ENCODE measurements at regions of chr1 and their contacts with region 1.

Region 1: GRCh38 chr1:150186789-150187559 is 37.3 kb downstream of the PLEKHO1 start:
- DNase-seq: no peak
- H3K4me3 ChIP-seq: no peak overlapping the region
- H3K27ac ChIP-seq: peak overlapping the region; percentile 0
- H3K27me3 ChIP-seq: no peaks in the 10 kb centered on the region
- CTCF ChIP-seq: peak; percentile 52

Region 2: GRCh38 chr1:149942207-149942606 is 244.8 kb before region 1 on chr1:
- CTCF ChIA-PET with region 1: interaction called, 11 read pairs
- POLR2A ChIA-PET with region 1: no interaction called
- DNase-seq: no peak
- H3K4me3 ChIP-seq: no peak overlapping the region
- H3K27ac ChIP-seq: no peak overlapping the region
- H3K27me3 ChIP-seq: no peaks in the 10 kb centered on the region
- CTCF ChIP-seq: peak; percentile 56

Region 3: GRCh38 chr1:150067184-150068036 is 119.6 kb before region 1 on chr1 and contains the start of gene VPS45:
- CTCF ChIA-PET with region 1: interaction called, 125 read pairs
- POLR2A ChIA-PET with region 1: no interaction called
- DNase-seq: peak; percentile 72
- H3K4me3 ChIP-seq: peak within 1 kb of the TSS; percentile 88
- H3K27ac ChIP-seq: peak within 1 kb of the TSS; percentile 96
- H3K27me3 ChIP-seq: no peaks in the 10 kb centered on the region
- CTCF ChIP-seq: peak; percentile 30
- polyA plus RNA-seq, gene VPS45: 49.5 and 61.3 TPM in 2 replicates

Region 4: DNA sequence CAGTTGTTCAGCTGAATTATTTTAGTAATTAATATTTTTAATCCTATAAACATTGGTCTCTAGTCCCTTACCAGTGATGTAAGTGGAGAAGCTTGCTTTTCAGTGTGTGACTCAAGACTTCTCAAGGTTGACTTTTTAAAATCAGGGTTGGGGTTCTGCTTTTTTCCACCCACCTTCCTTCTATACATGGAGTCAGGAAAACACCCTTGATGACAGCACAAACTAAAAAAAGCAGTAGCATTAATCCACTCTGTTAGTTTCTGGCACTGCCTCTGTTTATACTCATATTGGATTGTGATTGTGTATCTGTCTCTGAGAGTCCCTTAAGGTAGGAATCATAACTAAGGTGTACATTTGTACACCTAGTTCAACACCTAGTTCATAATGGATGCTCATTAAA is 45.5 kb before region 1 on chr1:
- CTCF ChIA-PET with region 1: interaction called, 10 read pairs
- POLR2A ChIA-PET with region 1: no interaction called
- DNase-seq: no peak
- H3K4me3 ChIP-seq: no peak overlapping the region
- H3K27ac ChIP-seq: no peak overlapping the region
- H3K27me3 ChIP-seq: no peaks in the 10 kb centered on the region
- CTCF ChIP-seq: no peak

Region 5: GRCh38 chr1:150176593-150176992 is 10.4 kb before region 1 on chr1:
- CTCF ChIA-PET with region 1: interaction called, 40 read pairs
- POLR2A ChIA-PET with region 1: no interaction called
- DNase-seq: no peak
- H3K4me3 ChIP-seq: no peak overlapping the region
- H3K27ac ChIP-seq: no peak overlapping the region
- H3K27me3 ChIP-seq: no peaks in the 10 kb centered on the region
- CTCF ChIP-seq: no peak